Activated CD4-positive, alpha-beta memory T cell treated with anti-CD3 and anti-CD28 coated beads for 36 hours (primary cell): ENCODE measurements at regions of chr6 and their contacts with region 1.

Region 1: DNA sequence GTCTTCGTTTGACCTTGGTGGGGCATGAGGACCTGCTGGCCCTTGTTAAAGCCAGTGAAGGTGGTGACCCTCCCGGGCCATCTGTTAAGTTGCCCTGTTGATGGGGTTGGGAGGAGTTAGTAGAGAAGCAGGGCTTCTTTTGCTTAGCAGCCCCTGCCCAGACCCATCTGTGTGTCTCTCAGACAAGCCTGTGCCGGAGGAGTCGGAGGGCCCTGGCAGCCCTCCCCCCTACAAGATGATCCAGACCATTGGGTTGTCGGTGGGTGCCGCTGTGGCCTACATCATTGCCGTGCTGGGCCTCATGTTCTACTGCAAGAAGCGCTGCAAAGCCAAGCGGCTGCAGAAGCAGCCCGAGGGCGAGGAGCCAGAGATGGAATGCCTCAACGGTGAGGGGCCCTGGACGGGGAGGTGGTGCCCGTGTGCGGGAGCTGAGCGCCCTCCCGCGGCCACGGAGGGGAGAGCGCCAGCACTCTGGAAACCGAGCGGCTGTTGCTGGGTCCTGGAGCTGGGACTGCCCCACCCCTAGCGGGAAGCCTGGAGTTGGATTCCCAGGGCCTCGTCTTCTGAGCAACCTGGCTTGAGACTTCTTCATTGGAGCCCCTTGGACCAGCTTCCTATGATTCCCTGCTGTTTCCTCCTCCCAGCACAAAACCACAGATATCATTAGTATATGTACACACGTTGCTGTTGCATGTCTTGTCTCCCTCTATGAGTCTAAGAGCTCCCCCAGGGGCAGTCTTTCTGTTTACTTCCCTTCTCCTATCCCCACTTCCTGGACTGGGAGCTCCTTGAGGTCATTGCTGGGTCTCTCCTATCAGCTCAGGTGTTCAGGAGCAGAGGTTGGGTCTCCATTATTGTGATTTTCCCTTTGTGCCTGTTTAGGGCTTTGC is 27.6 kb upstream of the SRF start:
- DNase-seq: peak; percentile 87
- H3K4me3 Mint-ChIP-seq: no peak overlapping the region
- H3K27ac Mint-ChIP-seq: no peak overlapping the region
- H3K4me1 Mint-ChIP-seq: peaks cover 7% of the 10 kb centered on the region
- H3K27me3 Mint-ChIP-seq: no peaks in the 10 kb centered on the region

Region 2: GRCh38 chr6:42963855-42964605 is 179.4 kb before region 1 on chr6:
- CTCF ChIA-PET with region 1: interaction called, 15 read pairs
- POLR2A ChIA-PET with region 1: no interaction called
- intact Hi-C with region 1: no loop called
- DNase-seq: peak; percentile 63
- H3K4me3 Mint-ChIP-seq: no peak overlapping the region
- H3K27ac Mint-ChIP-seq: no peak overlapping the region
- H3K4me1 Mint-ChIP-seq: peaks cover 13% of the 10 kb centered on the region
- H3K27me3 Mint-ChIP-seq: no peaks in the 10 kb centered on the region

Region 3: GRCh38 chr6:43013843-43014433 is 129.5 kb before region 1 on chr6 and contains the starts of genes KLHDC3 and MEA1:
- CTCF ChIA-PET with region 1: interaction called, 28 read pairs
- POLR2A ChIA-PET with region 1: no interaction called
- intact Hi-C with region 1: no loop called
- DNase-seq: peak; percentile 100
- H3K4me3 Mint-ChIP-seq: peak within 1 kb of the TSS; percentile 94
- H3K27ac Mint-ChIP-seq: peak within 1 kb of the TSS; percentile 87
- H3K4me1 Mint-ChIP-seq: peaks cover 55% of the 10 kb centered on the region
- H3K27me3 Mint-ChIP-seq: no peaks in the 10 kb centered on the region
- total RNA-seq, gene KLHDC3: 48.1 to 52.3 TPM
- total RNA-seq, gene MEA1: 90.2 to 94.4 TPM

Region 4: DNA sequence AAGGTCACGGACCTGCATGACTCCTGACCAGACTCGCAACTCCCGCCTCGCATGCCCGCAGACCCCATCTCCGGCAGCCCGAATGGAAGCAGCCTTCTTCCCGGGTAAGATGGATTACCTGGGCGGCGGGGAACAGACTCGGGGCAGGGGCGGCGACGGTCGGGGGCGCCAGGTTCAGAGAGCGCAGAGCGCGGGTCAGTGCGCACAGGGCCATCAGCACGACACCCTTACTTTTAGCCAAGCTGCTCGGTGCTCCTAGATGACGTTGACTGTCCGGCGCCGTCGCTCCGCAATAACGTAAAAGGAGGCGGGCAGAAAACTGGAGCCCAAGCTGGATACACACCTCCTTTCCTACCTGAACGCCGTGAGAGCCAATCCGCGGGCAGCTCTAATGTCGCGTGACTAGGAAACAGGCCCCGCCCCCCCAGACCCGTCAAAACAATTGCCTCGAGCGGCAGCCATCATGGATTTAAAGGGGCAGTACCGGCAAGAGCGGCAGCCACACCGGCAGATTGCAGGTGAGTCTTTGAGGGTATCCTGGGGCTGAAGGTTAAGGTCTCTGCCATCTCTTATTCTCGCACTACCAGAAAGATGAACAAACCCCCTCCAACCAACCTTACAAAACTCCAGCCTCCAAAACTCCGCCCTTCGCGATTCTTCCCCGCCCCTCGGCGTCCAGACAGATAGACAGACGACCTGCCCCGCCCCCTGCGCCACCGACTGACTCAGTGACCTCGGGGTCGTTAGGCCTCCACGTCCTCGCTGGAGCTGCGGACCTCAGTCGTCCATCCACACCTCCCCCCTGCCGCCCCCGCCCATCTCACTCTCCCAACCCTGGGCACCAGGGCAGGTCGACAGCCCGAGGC is 84.1 kb before region 1 on chr6 and contains the starts of genes KLC4 and MRPL2:
- CTCF ChIA-PET with region 1: interaction called, 10 read pairs
- POLR2A ChIA-PET with region 1: no interaction called
- intact Hi-C with region 1: loop called (anchors 5 kb)
- DNase-seq: peak; percentile 100
- H3K4me3 Mint-ChIP-seq: peak within 1 kb of the TSS; percentile 89
- H3K27ac Mint-ChIP-seq: peak within 1 kb of the TSS; percentile 95
- H3K4me1 Mint-ChIP-seq: peaks cover 30% of the 10 kb centered on the region
- H3K27me3 Mint-ChIP-seq: no peaks in the 10 kb centered on the region
- total RNA-seq, gene KLC4: 11.0 to 11.9 TPM
- total RNA-seq, gene MRPL2: 91.0 to 95.4 TPM

Region 5: GRCh38 chr6:43125119-43125518 is 18.4 kb before region 1 on chr6:
- CTCF ChIA-PET with region 1: interaction called, 14 read pairs
- POLR2A ChIA-PET with region 1: no interaction called
- intact Hi-C with region 1: no loop called
- DNase-seq: no peak
- H3K4me3 Mint-ChIP-seq: no peak overlapping the region
- H3K27ac Mint-ChIP-seq: no peak overlapping the region
- H3K4me1 Mint-ChIP-seq: no peaks in the 10 kb centered on the region
- H3K27me3 Mint-ChIP-seq: no peaks in the 10 kb centered on the region

Region 6: GRCh38 chr6:43436577-43437282 is 293.2 kb after region 1 on chr6:
- CTCF ChIA-PET with region 1: no interaction called
- POLR2A ChIA-PET with region 1: no interaction called
- intact Hi-C with region 1: no loop called
- DNase-seq: no peak
- H3K4me3 Mint-ChIP-seq: no peak overlapping the region
- H3K27ac Mint-ChIP-seq: peak overlapping the region; percentile 30
- H3K4me1 Mint-ChIP-seq: no peaks in the 10 kb centered on the region
- H3K27me3 Mint-ChIP-seq: no peaks in the 10 kb centered on the region